Breast epithelium (tissue), 4 donors: ENCODE measurements at regions of chr12 and their contacts with region 1.

Region 1: DNA sequence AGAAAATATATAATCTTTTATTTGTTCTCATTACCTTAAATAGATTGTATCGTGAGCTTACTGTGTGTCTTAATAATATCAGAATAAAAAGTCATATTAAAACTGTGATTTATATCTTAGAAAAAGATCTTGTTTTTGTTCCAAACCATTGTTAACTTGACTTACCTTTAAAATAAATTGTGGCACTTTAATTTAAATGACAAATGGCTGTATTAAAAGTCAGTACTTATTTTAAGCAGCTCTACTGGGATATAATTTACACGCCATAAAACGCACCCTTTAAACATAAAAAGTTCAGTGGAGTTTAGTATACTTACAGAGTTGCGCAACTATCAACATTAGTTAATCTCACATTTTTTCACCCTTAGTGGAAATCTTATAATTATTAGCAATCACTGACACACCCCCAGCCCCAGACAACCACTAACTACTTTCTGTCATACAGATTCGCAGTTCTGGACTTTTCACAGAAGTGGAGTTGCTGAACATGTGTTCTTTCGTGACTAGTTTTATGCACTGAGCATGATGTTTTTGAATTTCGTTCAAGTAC is 311.7 kb downstream of the ACSS3 start:
- DNase-seq: no peak
- H3K4me3 ChIP-seq: no peak overlapping the region
- H3K27ac ChIP-seq: no peak overlapping the region
- H3K4me1 ChIP-seq: no peaks in the 10 kb centered on the region
- H3K27me3 ChIP-seq: no peaks in the 10 kb centered on the region
- CTCF ChIP-seq: no peak
- POLR2A ChIP-seq: no peak

Region 2: GRCh38 chr12:80701388-80701787 is 688.2 kb before region 1 on chr12:
- intact Hi-C with region 1: no loop called
- DNase-seq: no peak
- H3K4me3 ChIP-seq: no peak overlapping the region
- H3K27ac ChIP-seq: no peak overlapping the region
- H3K4me1 ChIP-seq: no peaks in the 10 kb centered on the region
- H3K27me3 ChIP-seq: no peaks in the 10 kb centered on the region
- CTCF ChIP-seq: no peak
- POLR2A ChIP-seq: no peak

Region 3: GRCh38 chr12:82964446-82964845 is 1574.8 kb after region 1 on chr12:
- intact Hi-C with region 1: loop called (anchors 10 kb)
- DNase-seq: no peak
- H3K4me3 ChIP-seq: no peak overlapping the region
- H3K27ac ChIP-seq: no peak overlapping the region
- H3K4me1 ChIP-seq: no peaks in the 10 kb centered on the region
- H3K27me3 ChIP-seq: no peaks in the 10 kb centered on the region
- CTCF ChIP-seq: no peak
- POLR2A ChIP-seq: no peak